ENCODE measurements at regions of chr16 and their contacts with region 1.

Region 1: GRCh38 chr16:60949800-60950199 is 1086.4 kb downstream of the CDH8 start:
- DNase-seq: no peak
- H3K4me3 ChIP-seq: no peak overlapping the region
- H3K27ac ChIP-seq: no peak overlapping the region
- H3K4me1 ChIP-seq: no peaks in the 10 kb centered on the region
- H3K27me3 ChIP-seq: no peaks in the 10 kb centered on the region
- CTCF ChIP-seq: no peak
- POLR2A ChIP-seq: no peak

Region 2: DNA sequence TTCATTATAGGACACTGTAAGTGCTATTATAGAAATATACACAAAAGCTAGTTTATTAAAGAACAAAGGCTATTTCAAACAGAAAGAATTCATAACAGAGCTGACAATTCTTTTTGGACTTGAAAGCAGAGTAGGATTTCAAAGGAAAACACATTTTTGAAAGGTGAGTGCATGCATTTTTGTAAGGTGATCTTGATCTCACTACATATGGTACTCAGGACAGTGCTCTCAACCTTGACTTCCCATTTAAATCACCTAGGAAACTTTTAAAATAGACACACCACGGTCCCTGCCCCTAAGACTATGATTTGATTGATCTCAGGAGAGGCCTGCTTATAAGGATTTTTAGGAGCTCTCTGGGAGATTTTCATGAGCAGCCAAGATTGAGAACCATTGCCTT is 275.6 kb before region 1 on chr16:
- intact Hi-C with region 1: loop called (anchors 5 kb)
- DNase-seq: no peak
- H3K4me3 ChIP-seq: no peak overlapping the region
- H3K27ac ChIP-seq: no peak overlapping the region
- H3K4me1 ChIP-seq: no peaks in the 10 kb centered on the region
- H3K27me3 ChIP-seq: no peaks in the 10 kb centered on the region
- CTCF ChIP-seq: no peak
- POLR2A ChIP-seq: no peak

Measured in breast epithelium (tissue), 4 donors.